Panc1 (cell line): ENCODE measurements at regions of chr19 and their contacts with region 1.

Region 1: GRCh38 chr19:4878491-4878968 is 11.1 kb upstream of the PLIN3 start:
- DNase-seq: no peak
- ATAC-seq: no peak
- H3K4me3 ChIP-seq: no peak overlapping the region
- H3K27ac ChIP-seq: no peak overlapping the region
- H3K4me1 ChIP-seq: no peaks in the 10 kb centered on the region; the same call in 1 of the 2 replicates
- H3K27me3 ChIP-seq: no peaks in the 10 kb centered on the region
- CTCF ChIP-seq: no peak

Region 2: DNA sequence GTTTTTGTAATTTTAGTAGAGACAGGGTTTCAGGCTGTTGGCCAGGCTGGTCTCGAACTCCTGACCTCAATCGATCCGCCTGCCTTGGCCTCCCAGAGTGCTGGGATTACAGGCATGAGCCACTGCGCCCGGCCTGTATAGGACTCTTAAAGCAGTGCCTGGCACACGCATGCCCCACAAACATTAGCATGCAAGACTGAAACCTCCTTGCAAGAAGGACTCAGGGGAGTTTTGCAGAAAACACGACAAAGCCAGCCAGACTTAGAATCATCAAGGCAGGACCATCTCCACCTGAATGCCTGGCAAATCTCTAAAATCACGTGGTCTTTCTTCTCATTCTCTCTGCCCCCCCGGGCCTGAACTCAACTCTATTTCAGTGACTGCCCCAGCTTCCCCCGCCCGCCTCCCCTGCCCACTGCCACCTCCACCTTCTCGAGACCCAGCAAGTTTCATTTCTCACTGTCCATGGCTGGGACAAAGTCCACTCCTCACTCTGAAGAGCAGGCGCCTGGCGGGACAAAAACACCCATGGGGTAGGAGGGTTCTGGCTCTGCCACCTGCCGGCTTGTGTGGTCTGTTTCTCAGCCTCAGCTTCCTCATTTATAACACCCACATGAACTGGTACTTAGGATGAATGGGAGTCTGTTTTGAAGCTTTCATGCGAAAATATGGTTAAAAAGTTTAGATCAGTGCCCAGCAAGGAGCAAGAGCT is 49.4 kb before region 1 on chr19:
- CTCF ChIA-PET with region 1: no interaction called
- POLR2A ChIA-PET with region 1: interaction called, 12 read pairs
- in situ Hi-C with region 1: no loop called
- intact Hi-C with region 1: no loop called
- DNase-seq: no peak
- ATAC-seq: no peak
- H3K4me3 ChIP-seq: no peak overlapping the region
- H3K27ac ChIP-seq: no peak overlapping the region
- H3K4me1 ChIP-seq: no peaks in the 10 kb centered on the region; the same call in none of the 2 replicates
- H3K27me3 ChIP-seq: no peaks in the 10 kb centered on the region
- CTCF ChIP-seq: no peak

Region 3: GRCh38 chr19:5018224-5019015 is 139.9 kb after region 1 on chr19:
- CTCF ChIA-PET with region 1: no interaction called
- POLR2A ChIA-PET with region 1: no interaction called
- in situ Hi-C with region 1: no loop called
- intact Hi-C with region 1: no loop called
- DNase-seq: no peak
- ATAC-seq: no peak
- H3K4me3 ChIP-seq: no peak overlapping the region
- H3K27ac ChIP-seq: no peak overlapping the region
- H3K4me1 ChIP-seq: no peaks in the 10 kb centered on the region
- H3K27me3 ChIP-seq: no peaks in the 10 kb centered on the region
- CTCF ChIP-seq: no peak